Activated CD4-positive, alpha-beta memory T cell treated with anti-CD3 and anti-CD28 coated beads for 36 hours (primary cell): ENCODE measurements at regions of chr1 and their contacts with region 1.

Region 1: DNA sequence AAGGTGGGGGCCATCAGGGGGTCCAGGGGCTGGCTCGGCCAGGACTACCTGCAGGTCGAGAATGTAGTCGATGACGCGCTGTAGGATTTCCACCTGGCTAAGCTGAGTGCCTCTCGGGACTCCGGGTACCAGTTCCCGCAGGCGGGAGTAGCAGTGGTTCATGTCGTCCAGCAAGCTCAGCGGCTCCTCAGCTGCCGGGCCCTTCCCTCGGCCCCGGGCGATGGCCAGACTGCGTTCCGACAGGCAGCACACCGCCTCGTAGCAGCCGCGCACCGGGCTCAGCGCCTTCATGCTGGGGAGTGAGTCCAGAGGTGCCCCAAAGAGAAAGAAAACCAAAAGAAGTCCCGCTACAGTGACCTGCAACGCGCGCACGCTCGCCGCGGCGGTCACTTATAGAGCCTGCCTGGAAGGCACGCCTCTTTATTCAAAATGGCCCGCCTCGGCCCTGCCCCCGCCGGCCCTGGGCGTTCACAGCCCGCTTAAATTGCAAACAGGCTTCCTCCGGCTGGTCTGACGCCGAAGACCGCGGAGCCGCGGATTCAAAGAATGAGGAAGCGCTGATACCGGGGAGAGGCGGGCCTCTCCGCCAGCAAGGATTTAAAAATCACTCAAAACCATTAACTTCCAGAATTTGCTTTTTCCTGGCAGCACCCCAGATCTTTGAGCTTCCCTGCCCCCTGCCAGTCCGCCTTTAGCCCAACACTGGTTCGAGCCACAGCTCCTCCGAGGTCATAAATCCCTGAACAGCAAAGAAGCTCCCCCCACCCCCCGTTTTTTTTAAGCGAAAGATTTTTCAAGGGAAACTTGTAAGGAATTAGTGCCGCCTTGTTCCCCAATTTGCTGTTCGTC is at the start of gene ID3:
- DNase-seq: peak; percentile 95
- H3K4me3 Mint-ChIP-seq: peak within 1 kb of the TSS; percentile 91
- H3K27ac Mint-ChIP-seq: peak within 1 kb of the TSS; percentile 73
- H3K4me1 Mint-ChIP-seq: peaks cover 49% of the 10 kb centered on the region
- H3K27me3 Mint-ChIP-seq: no peaks in the 10 kb centered on the region
- total RNA-seq, gene ID3: 35.9 to 36.2 TPM

Region 2: DNA sequence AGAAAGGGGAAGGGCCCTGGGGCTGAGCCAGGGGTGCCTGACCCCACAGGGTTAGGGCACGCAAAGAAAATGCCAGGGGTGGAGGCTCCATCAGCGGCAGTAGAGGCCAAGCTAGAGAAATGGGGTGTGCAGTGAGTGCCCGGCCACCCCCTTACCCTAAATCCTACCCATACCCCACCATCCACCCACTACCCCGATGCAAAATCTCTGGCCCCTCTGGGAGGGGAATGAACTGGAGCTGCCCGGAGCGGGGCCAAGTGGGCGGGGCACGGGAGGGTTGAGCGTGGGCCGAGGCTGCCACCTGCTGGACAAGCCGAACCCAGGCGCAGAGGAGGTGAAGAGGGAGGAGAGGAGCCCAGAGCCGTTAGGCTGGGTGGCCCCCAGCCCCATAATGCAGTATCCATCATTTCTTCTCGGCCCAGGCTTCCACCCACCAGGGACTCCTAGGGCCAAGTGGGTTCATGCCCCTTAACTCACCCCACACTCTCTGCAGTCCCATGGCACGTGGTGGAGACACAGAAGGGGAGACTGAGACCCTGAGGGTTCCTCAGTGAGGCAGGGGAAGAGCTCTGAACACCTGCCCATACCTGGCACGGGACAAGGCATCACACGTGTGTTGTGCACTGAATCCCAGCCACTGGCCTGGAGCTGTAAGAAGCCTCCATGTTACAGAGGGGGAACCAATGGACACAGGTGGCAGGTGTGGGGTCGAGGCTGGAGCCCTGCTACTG is 917.3 kb before region 1 on chr1:
- CTCF ChIA-PET with region 1: no interaction called
- POLR2A ChIA-PET with region 1: no interaction called
- intact Hi-C with region 1: no loop called
- DNase-seq: peak; percentile 77
- H3K4me3 Mint-ChIP-seq: no peak overlapping the region
- H3K27ac Mint-ChIP-seq: no peak overlapping the region
- H3K4me1 Mint-ChIP-seq: no peaks in the 10 kb centered on the region
- H3K27me3 Mint-ChIP-seq: peaks cover 22% of the 10 kb centered on the region

Region 3: DNA sequence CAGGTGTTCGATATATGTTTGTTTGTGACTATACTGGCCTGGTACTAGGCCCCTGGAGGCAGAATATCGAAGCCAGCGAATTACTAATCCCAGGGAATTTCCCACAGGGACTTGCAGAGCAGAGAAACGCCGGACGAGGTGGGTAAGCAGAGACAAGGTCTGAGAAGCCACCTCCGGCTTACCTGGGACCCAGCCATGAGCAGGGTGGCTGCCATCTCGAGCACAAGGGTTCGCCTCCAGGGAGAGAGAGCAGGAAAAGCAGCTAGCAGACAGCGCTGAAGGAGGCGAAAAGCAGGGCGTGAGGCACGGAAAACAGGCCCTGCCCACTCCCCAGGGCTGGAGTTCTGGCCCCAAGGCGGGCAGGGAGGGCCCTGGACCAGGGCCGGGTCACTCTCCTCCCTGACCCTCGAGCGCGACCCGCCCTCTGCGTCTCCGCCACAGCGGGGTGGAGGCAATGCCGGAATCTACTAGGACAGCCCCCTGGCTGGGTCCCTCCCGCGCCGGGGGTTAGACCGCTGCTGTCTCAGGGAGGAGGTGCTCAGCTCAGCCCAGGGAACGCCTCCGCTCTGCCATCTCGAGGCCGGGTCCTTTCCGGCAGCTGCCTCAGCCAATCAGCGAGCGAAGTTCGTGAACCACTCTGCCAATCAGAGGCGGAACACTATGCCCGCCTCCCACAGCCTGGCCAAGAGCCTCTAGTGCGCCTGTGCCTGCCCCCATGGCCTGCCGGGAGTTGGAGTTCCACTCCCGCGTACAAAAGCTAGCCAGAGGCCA is 191.4 kb before region 1 on chr1:
- CTCF ChIA-PET with region 1: no interaction called
- POLR2A ChIA-PET with region 1: no interaction called
- intact Hi-C with region 1: loop called (anchors 2 kb)
- DNase-seq: peak; percentile 99
- H3K4me3 Mint-ChIP-seq: peak overlapping the region; percentile 93
- H3K27ac Mint-ChIP-seq: peak overlapping the region; percentile 98
- H3K4me1 Mint-ChIP-seq: peaks cover 30% of the 10 kb centered on the region
- H3K27me3 Mint-ChIP-seq: no peaks in the 10 kb centered on the region

Region 4: GRCh38 chr1:23530747-23531561 is 28.4 kb before region 1 on chr1 and contains the start of gene E2F2:
- CTCF ChIA-PET with region 1: interaction called, 6 read pairs
- POLR2A ChIA-PET with region 1: interaction called, 6 read pairs
- intact Hi-C with region 1: loop called (anchors 2 kb)
- DNase-seq: peak; percentile 89
- H3K4me3 Mint-ChIP-seq: peak within 1 kb of the TSS; percentile 88
- H3K27ac Mint-ChIP-seq: peak within 1 kb of the TSS; percentile 91
- H3K4me1 Mint-ChIP-seq: peaks cover 75% of the 10 kb centered on the region
- H3K27me3 Mint-ChIP-seq: no peaks in the 10 kb centered on the region
- total RNA-seq, gene E2F2: 22.1 to 26.3 TPM

Region 5: GRCh38 chr1:23539698-23540266 is 19.6 kb before region 1 on chr1:
- CTCF ChIA-PET with region 1: interaction called, 30 read pairs
- POLR2A ChIA-PET with region 1: interaction called, 3 read pairs
- intact Hi-C with region 1: no loop called
- DNase-seq: peak; percentile 96
- H3K4me3 Mint-ChIP-seq: peak overlapping the region; percentile 55
- H3K27ac Mint-ChIP-seq: peak overlapping the region; percentile 62
- H3K4me1 Mint-ChIP-seq: peaks cover 17% of the 10 kb centered on the region
- H3K27me3 Mint-ChIP-seq: no peaks in the 10 kb centered on the region

Region 6: GRCh38 chr1:23577056-23578004 is 18.0 kb after region 1 on chr1:
- CTCF ChIA-PET with region 1: interaction called, 9 read pairs
- POLR2A ChIA-PET with region 1: interaction called, 10 read pairs
- intact Hi-C with region 1: loop called (anchors 1 kb)
- DNase-seq: peak; percentile 71
- H3K4me3 Mint-ChIP-seq: peak overlapping the region; percentile 4
- H3K27ac Mint-ChIP-seq: peak overlapping the region; percentile 55
- H3K4me1 Mint-ChIP-seq: peaks cover 27% of the 10 kb centered on the region
- H3K27me3 Mint-ChIP-seq: no peaks in the 10 kb centered on the region

Region 7: DNA sequence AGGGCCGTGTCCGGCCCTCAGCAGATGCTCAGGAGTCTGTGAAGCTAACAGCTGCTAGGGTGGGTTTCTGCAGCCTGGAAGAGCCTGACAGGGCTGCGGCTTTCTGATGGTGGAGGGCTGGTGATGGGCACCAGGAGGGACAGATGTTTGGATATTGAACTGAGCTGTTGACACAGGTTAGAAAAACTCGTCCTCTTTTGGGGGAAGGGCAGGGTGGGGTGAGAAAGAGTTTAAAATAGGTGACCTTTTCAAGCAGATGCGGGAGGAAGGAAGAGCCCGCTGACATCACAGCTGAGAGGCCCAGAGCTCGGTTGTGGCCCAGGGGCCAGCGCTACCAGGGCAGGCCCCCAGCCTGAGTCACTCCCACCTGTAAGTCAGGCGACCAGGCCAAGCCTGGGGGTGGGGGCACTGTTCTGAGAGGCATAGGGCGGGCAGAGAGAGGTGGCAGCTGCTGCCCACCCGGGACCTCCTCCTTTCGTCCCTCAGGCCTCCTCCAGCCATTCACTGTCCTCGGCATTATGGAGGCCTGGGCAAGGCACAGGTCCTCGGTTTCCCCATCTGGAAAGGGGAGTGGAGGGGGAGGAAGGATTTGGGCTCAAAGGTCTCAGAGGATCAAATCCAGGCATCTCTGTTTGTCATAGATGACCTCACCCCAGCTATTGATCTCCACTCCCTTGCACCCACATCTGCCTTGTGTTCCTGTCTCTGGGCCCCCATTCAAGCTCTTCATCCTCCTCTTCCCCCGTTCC is 32.3 kb after region 1 on chr1:
- CTCF ChIA-PET with region 1: interaction called, 5 read pairs
- POLR2A ChIA-PET with region 1: interaction called, 5 read pairs
- intact Hi-C with region 1: loop called (anchors 1 kb)
- DNase-seq: peak; percentile 82
- H3K4me3 Mint-ChIP-seq: peak overlapping the region; percentile 13
- H3K27ac Mint-ChIP-seq: peak overlapping the region; percentile 79
- H3K4me1 Mint-ChIP-seq: peaks cover 53% of the 10 kb centered on the region
- H3K27me3 Mint-ChIP-seq: no peaks in the 10 kb centered on the region

Region 8: GRCh38 chr1:23619299-23620188 is 60.2 kb after region 1 on chr1:
- CTCF ChIA-PET with region 1: interaction called, 12 read pairs
- POLR2A ChIA-PET with region 1: interaction called, 16 read pairs
- intact Hi-C with region 1: loop called (anchors 2 kb)
- DNase-seq: peak; percentile 90
- H3K4me3 Mint-ChIP-seq: peak overlapping the region; percentile 67
- H3K27ac Mint-ChIP-seq: peak overlapping the region; percentile 76
- H3K4me1 Mint-ChIP-seq: peaks cover 76% of the 10 kb centered on the region
- H3K27me3 Mint-ChIP-seq: no peaks in the 10 kb centered on the region